Endothelial cell of umbilical vein (primary cell): ENCODE measurements at regions of chr12 and their contacts with region 1.

Region 1: DNA sequence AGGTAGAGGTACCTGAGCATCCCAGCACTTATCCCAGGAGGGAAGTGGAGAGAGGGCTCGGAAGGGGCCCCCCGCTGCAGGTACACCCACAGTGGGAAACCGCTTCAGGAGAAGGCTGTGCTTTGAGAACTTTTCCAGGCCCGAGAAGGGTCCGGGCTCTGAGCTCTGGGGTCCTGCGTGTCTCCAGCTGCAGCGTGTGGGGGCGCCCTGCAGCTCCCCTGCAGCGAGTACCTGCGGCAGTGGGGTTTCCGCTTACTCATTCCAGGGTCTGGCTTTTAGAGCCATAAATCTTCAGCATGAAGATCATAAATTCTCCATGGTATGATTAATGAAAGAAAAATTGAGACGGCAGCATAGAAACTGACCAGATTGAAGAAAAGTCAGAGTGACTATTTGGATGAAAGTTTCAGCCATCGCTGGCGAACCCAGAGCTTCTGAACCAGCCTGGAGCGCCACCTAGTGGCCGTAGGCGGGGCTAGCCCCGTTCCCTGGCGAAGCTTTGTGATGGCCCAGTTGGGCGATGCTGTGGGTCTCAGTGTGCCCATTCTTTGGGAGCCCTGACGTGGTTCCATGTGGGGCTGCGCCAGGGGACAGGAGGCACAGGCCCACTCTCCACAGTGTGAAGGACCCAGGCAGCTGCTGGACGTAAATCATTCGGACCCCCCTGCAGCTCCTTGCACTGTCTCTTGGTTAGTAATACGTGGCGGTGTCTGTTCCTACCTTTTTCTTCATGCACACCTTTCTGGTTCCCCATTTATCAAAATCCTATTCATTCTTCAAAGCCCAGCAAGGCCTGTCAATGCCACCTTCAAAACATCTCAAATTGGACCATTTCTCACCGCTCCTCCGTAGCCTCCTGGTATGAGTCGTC is 198.2 kb downstream of the TSPAN9 start:
- DNase-seq: peak; percentile 48
- H3K4me3 ChIP-seq: no peak overlapping the region
- H3K27ac ChIP-seq: no peak overlapping the region
- H3K4me1 ChIP-seq: no peaks in the 10 kb centered on the region
- H3K27me3 ChIP-seq: no peaks in the 10 kb centered on the region
- CTCF ChIP-seq: peak; percentile 95 to 96
- POLR2A ChIP-seq: no peak

Region 2: DNA sequence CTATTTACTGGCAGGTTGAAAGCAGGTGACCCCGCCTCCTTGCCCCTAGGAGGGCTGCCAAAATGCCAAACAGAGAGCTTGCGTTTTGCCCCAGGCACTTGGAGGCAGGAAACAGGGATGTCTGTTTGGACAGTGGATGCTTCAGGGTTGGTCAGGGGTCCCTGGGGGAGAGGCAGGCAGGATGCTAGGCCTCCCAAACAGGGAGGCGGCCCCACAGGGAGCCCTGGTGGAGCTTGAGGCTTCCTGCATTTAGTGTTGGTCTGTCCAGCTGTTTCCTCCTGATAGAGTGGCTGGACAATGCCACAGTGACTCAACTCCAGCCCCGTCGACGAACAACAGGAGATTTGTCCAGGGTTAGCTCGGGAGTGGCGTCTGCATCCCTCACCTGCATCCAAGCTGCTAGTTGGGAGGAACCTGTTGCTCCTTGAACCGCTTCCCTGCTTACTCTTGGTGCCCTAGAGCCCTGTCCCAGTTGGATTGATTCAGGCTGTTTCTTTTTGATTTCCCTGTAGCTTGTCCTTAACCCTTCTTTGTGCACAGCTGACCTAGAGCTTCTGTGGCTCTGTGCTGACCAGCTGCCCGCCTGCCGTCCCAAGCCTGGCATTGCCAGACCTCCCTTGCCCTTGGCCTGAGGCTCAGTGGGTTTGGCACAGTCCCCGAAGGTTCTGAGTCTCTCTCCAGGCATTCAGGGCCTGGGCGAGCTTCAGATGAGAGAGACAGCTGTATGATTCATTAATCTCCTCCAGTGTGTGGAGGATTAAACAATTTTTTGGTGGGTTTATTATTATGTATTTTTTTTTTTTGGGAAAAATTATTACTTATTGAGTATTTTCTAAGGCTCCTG is 152.3 kb before region 1 on chr12:
- CTCF ChIA-PET with region 1: interaction called, 25 read pairs
- POLR2A ChIA-PET with region 1: no interaction called
- dilution Hi-C with region 1: no loop called
- intact Hi-C with region 1: no loop called
- DNase-seq: peak; percentile 98
- H3K4me3 ChIP-seq: no peak overlapping the region
- H3K27ac ChIP-seq: peak overlapping the region; percentile 65
- H3K4me1 ChIP-seq: peaks cover 18% of the 10 kb centered on the region
- H3K27me3 ChIP-seq: no peaks in the 10 kb centered on the region
- CTCF ChIP-seq: peak; percentile 15 to 41
- POLR2A ChIP-seq: peak; percentile 72

Region 3: DNA sequence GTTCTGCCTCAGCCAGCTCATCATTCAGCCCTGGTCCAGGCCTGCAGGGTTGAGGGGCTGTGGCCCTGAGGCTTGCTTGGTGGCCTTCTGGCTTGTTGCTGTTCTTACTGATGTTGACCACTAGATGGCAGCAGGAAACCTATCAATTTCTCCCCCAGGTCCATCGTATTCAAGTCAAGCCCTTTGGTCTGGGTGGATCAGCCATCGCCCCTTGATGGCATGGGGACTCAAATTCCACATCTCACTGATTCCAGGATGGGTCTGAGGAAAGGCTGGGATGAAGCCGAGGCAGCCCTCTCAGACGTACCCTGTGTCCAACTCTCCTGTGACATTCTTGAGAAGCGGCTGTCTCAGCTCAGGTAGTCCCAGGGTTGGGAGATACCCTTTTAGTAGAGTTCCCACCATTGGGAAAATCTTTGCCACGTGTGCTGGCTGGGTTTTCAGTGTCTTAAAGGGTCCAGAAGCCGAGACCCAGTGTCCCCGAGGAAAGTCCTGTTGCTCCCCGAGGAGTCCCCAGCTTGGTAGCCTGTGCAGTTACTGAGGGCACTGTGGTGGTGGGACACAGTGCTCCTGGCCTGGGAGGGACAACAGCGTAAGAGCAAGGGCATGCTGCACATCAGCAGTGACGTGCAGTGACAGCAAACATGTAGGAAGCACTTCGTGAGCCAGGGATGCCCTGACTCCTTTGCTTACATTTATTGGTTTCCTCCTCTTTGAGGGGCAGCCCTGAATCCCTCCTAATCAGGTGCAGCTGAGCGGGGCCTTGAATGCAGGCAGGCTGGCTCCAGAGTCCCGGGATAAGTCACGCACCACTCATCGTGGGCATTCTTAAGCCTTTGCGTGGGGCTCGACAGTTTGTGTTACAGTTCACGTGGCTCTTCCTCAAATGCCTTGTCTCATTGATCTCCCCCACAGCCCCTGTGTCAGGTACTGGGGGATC is 139.6 kb before region 1 on chr12:
- CTCF ChIA-PET with region 1: interaction called, 312 read pairs
- POLR2A ChIA-PET with region 1: no interaction called
- dilution Hi-C with region 1: loop called (anchors 5 kb)
- intact Hi-C with region 1: loop called (anchors 1 kb)
- DNase-seq: peak; percentile 69
- H3K4me3 ChIP-seq: no peak overlapping the region
- H3K27ac ChIP-seq: no peak overlapping the region
- H3K4me1 ChIP-seq: peaks cover 11% of the 10 kb centered on the region
- H3K27me3 ChIP-seq: no peaks in the 10 kb centered on the region
- CTCF ChIP-seq: peak; percentile 75 to 79
- POLR2A ChIP-seq: no peak

Region 4: DNA sequence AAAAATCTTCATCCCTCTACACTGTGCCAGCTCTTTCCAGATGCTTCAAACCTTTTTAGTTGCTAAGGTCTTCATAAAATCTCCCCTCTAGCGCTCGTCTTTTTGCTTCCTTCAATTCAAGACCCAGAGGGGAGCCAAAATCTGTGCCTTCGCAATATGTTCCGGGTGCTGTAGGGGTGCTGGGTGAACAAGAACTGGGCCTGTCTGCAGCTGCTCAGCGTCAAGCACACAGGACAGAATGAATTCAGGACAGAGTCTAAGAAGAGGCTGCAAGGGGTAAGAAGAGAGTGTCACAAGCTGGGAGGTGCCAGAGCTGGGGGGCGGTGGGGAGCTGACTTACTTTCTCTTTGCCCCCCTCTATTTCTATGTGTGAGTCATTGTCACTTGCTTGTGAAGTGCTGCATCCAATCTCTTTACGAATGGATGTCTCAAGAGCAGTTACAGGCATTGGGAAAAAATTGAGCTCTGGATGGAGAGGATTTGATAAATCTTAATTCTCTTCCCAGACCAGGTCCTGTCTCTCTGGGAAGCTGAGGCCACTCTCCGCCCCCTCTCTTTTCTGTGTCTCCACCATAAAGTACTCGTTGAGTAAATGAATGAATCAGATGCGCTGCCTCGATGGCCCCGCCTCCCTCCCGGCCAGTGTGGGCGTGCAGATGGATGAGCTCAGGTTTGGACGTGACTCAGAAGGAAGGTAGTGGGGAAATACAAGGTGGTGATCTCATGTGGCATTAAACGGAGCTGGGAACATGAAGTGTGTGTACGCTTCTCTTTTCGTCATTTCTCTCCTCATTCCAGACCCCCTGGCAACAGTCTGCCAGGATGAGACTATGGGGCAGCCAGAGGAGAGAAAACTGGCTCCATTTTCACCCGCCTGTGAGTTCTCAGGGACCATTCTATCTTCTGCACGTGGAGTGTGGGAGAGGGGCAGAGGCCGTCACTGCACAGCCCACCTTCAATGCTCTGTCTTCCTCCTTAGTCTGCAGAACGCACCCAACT is 106.9 kb before region 1 on chr12:
- CTCF ChIA-PET with region 1: interaction called, 12 read pairs
- POLR2A ChIA-PET with region 1: no interaction called
- dilution Hi-C with region 1: no loop called
- intact Hi-C with region 1: no loop called
- DNase-seq: no peak
- H3K4me3 ChIP-seq: no peak overlapping the region
- H3K27ac ChIP-seq: no peak overlapping the region
- H3K4me1 ChIP-seq: peaks cover 10% of the 10 kb centered on the region
- H3K27me3 ChIP-seq: no peaks in the 10 kb centered on the region
- CTCF ChIP-seq: no peak
- POLR2A ChIP-seq: no peak

Region 5: DNA sequence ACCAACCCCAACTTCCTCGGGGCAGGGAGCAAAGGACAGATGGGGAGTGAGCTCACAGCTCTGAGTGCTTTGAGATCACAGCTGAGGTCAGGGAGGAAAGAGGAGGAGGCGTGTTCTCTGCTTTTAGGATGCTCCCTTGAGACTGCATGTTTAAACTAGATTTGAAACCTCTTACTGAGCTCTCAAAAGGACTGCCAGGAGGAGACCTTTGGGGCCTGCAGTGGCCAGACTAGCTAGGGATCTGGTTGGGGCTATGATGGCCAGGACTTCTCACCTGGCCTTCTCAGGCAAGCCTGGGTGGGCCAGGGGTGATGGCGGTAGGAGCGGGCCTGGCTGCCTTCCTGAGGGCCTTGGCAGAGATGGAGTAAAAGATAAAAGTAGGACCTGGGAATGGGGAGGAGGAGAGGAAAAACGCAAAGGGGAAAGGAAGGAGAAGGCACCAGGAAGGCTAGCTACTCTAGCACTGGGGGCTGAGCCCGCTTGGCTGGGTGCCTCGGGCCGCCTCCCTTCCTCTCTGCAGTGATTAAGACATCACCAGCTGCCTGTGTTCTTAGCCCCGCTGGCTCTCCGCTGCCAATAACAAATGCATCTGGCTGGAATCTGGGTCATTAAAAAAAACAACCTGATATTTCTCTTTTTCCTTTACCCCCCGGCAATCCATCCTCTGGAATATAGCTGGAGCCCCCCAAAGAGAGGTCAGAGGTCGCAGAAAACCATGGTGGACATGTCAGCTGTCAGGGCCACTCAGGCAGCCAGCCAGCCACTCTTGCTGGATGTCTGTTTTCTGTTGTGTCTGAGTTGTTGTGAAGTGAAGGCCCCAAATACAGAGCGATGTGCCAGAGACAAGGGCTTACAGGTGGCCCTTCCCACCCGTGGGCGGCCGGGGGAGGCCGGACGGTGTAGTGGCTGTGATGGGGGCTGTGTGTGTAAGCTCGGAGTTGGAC is 56.9 kb before region 1 on chr12:
- CTCF ChIA-PET with region 1: interaction called, 28 read pairs
- POLR2A ChIA-PET with region 1: no interaction called
- dilution Hi-C with region 1: no loop called
- intact Hi-C with region 1: loop called (anchors 5 kb)
- DNase-seq: peak; percentile 88
- H3K4me3 ChIP-seq: no peak overlapping the region
- H3K27ac ChIP-seq: peak overlapping the region; percentile 65
- H3K4me1 ChIP-seq: peaks cover 29% of the 10 kb centered on the region
- H3K27me3 ChIP-seq: no peaks in the 10 kb centered on the region
- CTCF ChIP-seq: peak in 1 of 2 donors; percentile 4
- POLR2A ChIP-seq: no peak

Region 6: GRCh38 chr12:3236345-3237187 is 38.8 kb before region 1 on chr12:
- CTCF ChIA-PET with region 1: interaction called, 21 read pairs
- POLR2A ChIA-PET with region 1: no interaction called
- dilution Hi-C with region 1: no loop called
- intact Hi-C with region 1: no loop called
- DNase-seq: peak; percentile 67
- H3K4me3 ChIP-seq: no peak overlapping the region
- H3K27ac ChIP-seq: no peak overlapping the region
- H3K4me1 ChIP-seq: peaks cover 4% of the 10 kb centered on the region
- H3K27me3 ChIP-seq: no peaks in the 10 kb centered on the region
- CTCF ChIP-seq: no peak
- POLR2A ChIP-seq: no peak

Region 7: DNA sequence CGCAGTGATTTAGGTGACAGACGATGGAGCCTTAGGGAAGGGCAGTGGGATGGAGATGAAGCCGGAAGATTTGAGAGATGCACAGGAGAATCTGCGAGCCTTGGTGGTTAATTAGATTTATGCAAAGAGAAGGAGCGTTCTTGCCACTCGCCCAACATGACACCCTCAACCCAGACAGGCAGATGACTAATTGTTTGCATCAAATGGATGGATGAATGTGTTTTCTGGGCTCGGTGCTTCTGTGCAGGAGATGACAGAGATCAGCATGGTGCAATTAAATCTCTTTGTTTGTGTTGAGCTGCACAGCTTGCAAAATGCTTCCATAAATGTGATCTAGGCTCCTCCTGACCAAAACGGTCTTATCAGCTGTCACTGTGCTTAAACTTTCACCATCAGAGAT is 13.3 kb after region 1 on chr12:
- CTCF ChIA-PET with region 1: interaction called, 10 read pairs
- POLR2A ChIA-PET with region 1: no interaction called
- dilution Hi-C with region 1: no loop called
- intact Hi-C with region 1: no loop called
- DNase-seq: no peak
- H3K4me3 ChIP-seq: no peak overlapping the region
- H3K27ac ChIP-seq: no peak overlapping the region
- H3K4me1 ChIP-seq: no peaks in the 10 kb centered on the region
- H3K27me3 ChIP-seq: no peaks in the 10 kb centered on the region
- CTCF ChIP-seq: no peak
- POLR2A ChIP-seq: no peak

Region 8: DNA sequence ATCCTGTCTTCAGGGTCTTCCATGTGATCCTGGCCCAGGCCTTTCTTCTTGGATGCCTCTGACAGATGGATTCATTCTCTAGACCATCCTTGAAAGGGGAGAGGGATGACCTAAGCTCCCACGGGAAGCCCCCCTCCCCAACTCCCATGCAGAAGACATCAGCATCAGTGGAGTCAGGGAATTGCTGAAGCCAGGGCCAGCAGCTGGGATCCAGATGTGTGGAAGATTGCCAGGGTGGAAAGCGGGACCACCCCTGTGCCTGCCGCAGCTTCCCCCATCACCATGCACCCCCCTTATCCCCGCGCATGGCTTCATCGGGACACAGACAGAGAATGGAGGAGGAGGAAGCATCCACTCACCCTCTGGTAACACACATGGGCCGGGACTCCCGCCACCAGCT is 32.0 kb after region 1 on chr12:
- CTCF ChIA-PET with region 1: no interaction called
- POLR2A ChIA-PET with region 1: no interaction called
- dilution Hi-C with region 1: no loop called
- intact Hi-C with region 1: no loop called
- DNase-seq: no peak
- H3K4me3 ChIP-seq: no peak overlapping the region
- H3K27ac ChIP-seq: no peak overlapping the region
- H3K4me1 ChIP-seq: peaks cover 11% of the 10 kb centered on the region
- H3K27me3 ChIP-seq: no peaks in the 10 kb centered on the region
- CTCF ChIP-seq: no peak
- POLR2A ChIP-seq: no peak

Region 9: DNA sequence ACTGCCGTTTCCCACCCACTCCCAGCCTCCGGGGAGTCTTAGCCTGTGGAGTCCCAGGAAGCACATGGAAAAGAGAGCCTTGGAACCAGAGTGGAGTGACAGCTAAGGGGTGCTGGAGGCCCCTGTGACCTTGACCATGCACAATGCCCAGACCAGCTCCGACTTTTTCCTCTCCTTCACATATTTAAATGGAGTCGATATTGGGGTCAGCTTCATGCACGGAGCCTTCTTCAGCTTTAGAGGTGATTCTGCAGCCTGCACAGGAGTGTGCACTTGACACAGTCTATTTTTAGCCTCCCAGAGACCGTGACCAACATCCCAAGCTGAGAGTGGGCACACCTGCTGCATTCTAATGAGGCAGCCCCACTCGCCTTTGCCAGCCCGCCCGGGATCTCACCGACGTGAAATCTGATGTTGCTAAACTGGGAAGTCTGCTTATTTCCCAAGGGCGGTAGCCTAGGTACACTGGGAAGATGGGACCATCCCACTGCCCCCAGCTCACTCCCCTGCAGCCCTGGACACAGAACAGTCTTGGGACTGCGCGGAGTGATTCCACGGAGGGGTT is 263.1 kb after region 1 on chr12:
- CTCF ChIA-PET with region 1: no interaction called
- POLR2A ChIA-PET with region 1: no interaction called
- dilution Hi-C with region 1: no loop called
- intact Hi-C with region 1: no loop called
- DNase-seq: no peak
- H3K4me3 ChIP-seq: no peak overlapping the region
- H3K27ac ChIP-seq: no peak overlapping the region
- H3K4me1 ChIP-seq: no peaks in the 10 kb centered on the region
- H3K27me3 ChIP-seq: peaks cover 0 to 4% of the 10 kb centered on the region in 2 experiments
- CTCF ChIP-seq: no peak
- POLR2A ChIP-seq: no peak